ENCODE measurements at regions of chr3 and their contacts with region 1.

Region 1: DNA sequence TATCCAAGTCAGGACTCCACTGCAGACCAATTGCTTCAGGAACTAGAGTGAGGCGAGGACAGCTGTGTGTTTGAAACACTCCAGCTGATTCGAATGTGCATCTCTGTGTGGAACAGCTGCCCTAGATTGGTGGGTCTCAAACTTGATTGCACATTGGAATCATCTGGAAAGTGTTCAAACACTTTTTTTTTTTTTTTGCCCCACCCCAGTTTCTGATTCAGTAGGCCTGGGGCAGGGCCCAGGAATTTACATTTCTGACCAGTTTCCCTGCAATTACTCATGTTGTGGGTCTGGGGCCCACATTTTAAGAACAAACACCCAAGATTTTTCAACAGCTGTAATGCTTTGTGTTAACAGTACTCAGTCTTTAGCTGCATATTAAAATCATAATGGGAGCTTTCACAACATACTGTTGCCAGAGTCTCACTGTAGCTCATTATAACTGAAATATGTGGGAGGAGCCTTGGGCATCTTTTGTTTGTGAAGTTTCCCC is 156.6 kb downstream of the NR1D2 start:
- DNase-seq: no peak
- ATAC-seq: no peak
- H3K4me3 ChIP-seq: no peak overlapping the region
- H3K27ac ChIP-seq: no peak overlapping the region
- H3K4me1 ChIP-seq: no peaks in the 10 kb centered on the region
- H3K27me3 ChIP-seq: no peaks in the 10 kb centered on the region
- CTCF ChIP-seq: no peak

Region 2: DNA sequence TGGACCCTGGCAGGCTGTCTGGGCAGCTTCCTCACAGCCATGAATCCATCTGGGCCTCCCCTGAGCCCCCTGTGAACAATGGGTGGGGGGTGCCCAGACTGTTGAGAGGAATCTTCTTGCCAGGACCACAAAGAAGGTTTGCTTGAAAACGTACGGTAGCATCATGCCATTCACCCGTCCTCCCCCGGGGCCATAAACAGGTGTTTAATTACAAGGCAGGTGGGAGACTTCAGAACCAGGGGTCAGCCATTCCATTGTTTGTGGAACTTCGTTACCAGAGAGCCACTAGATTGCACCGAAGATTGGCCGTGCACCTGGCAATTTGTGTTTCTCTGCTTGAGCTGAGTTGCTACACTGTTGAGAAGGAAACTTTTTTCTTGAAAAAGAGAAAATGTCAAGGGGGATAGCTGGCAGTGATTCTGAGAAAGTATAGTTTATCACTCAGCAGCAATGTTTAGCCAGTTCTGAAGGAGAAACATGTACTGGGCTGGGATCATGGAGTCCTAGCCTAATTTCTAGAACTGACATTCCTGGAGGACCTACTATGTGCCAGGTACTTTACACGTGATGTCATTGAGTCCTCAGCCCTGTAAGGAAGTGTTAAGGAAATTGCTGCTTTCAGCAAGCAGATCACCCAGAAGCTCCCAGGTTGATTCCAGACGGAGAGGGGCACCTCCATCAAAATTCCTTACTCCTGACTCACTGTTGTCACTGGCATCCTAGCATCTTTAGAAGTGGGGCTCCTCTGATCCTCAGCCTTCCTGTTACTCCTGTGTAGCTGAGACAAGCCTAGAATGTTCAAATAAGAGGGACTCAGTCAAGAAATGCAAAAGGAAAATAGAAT is 399.8 kb before region 1 on chr3:
- CTCF ChIA-PET with region 1: no interaction called
- POLR2A ChIA-PET with region 1: no interaction called
- in situ Hi-C with region 1: no loop called
- intact Hi-C with region 1: no loop called
- DNase-seq: no peak
- ATAC-seq: 0 out of 2 replicates have a peak, but pooled peaks have one; percentile 54
- H3K4me3 ChIP-seq: no peak overlapping the region
- H3K27ac ChIP-seq: peak overlapping the region; percentile 39; the same call in 1 of the 2 replicates
- H3K4me1 ChIP-seq: peaks cover 8% of the 10 kb centered on the region
- H3K27me3 ChIP-seq: no peaks in the 10 kb centered on the region
- CTCF ChIP-seq: no peak

Region 3: DNA sequence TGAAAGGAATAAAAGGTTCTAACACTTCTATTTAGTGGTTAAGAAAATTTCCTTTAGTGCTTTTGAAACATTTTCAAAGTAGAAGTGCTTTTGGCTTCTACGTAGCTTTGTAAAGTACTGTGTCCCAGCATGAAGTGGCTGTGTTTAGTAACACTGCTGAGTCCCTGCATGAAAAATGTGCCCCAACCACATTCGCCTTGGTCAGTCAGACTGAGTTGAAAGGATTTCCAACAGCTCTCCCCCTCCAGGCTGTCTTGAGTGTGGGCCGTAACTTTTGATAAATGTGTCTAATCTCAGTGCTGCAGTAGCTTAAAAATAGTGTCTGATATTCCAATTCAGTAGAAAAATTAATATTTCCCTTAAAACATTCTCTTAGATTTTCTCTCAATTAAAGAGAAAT is 41.7 kb before region 1 on chr3:
- CTCF ChIA-PET with region 1: no interaction called
- POLR2A ChIA-PET with region 1: interaction called, 10 read pairs
- in situ Hi-C with region 1: no loop called
- intact Hi-C with region 1: no loop called
- DNase-seq: no peak
- ATAC-seq: no peak
- H3K4me3 ChIP-seq: no peak overlapping the region
- H3K27ac ChIP-seq: no peak overlapping the region
- H3K4me1 ChIP-seq: no peaks in the 10 kb centered on the region
- H3K27me3 ChIP-seq: no peaks in the 10 kb centered on the region
- CTCF ChIP-seq: no peak

Measured in Panc1 (cell line).